Common myeloid progenitor, CD34-positive (primary cell): ENCODE measurements at regions of chr17 and their contacts with region 1.

Region 1: DNA sequence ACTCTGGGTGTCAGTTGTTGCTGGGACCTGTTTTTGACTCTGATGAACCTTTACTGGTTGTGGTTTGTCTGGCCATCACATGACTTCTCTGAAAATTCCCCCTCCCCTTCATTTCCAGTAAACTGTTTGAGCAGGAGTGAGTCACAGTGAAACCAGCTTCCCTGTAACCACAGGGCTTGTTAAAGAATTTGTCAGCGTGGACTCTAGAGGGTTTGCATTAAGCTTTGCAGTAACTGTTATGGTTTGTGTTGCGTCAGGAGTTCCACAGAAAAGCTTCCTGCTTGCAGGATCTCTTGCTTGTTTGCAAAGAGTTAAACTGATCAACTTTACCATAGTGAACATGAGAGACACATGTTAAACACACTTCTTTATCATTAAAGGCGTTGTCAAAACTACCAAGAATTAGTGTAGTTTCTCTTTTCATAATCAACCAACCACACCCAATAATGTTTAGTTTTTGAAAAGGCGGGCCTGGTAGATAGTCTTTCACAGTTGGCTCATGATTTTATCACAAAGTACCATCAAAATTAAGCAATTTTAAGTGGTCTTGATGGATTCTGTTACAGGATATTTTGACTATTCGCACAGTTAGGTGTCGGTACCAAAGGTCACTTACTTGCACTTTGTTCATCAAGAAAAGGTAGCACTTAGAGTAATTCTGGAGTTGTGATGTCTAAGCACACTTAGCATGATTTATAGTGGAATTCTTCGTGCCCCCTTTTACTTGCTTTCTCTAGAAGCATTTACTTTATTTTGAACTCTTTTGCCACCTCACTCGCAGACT is 79.3 kb downstream of the VMP1 start:
- DNase-seq: peak; percentile 96 to 99 (median 98)
- H3K4me3 ChIP-seq: peak overlapping the region in 6 of 7 experiments; percentile 21 to 65 (median 51)
- H3K27ac ChIP-seq: peak overlapping the region; percentile 93 to 96
- H3K4me1 ChIP-seq: peaks cover 37 to 79% (median 64%) of the 10 kb centered on the region in 4 experiments
- H3K27me3 ChIP-seq: no peaks in the 10 kb centered on the region

Region 2: GRCh38 chr17:59796785-59797205 is 10.1 kb after region 1 on chr17:
- CTCF ChIA-PET with region 1: interaction called, 13 read pairs
- POLR2A ChIA-PET with region 1: no interaction called
- DNase-seq: no peak
- H3K4me3 ChIP-seq: no peak overlapping the region
- H3K27ac ChIP-seq: no peak overlapping the region
- H3K4me1 ChIP-seq: peaks cover 0 to 20% (median 6%) of the 10 kb centered on the region in 4 experiments
- H3K27me3 ChIP-seq: no peaks in the 10 kb centered on the region

Region 3: GRCh38 chr17:59829217-59830006 is 42.7 kb after region 1 on chr17:
- CTCF ChIA-PET with region 1: interaction called, 8 read pairs
- POLR2A ChIA-PET with region 1: interaction called, 21 read pairs
- DNase-seq: peak; percentile 95 to 99 (median 97)
- H3K4me3 ChIP-seq: peak overlapping the region in 6 of 7 experiments; percentile 8 to 61 (median 46)
- H3K27ac ChIP-seq: peak overlapping the region; percentile 98 to 99
- H3K4me1 ChIP-seq: peaks cover 48 to 77% (median 73%) of the 10 kb centered on the region in 4 experiments
- H3K27me3 ChIP-seq: no peaks in the 10 kb centered on the region

Region 4: DNA sequence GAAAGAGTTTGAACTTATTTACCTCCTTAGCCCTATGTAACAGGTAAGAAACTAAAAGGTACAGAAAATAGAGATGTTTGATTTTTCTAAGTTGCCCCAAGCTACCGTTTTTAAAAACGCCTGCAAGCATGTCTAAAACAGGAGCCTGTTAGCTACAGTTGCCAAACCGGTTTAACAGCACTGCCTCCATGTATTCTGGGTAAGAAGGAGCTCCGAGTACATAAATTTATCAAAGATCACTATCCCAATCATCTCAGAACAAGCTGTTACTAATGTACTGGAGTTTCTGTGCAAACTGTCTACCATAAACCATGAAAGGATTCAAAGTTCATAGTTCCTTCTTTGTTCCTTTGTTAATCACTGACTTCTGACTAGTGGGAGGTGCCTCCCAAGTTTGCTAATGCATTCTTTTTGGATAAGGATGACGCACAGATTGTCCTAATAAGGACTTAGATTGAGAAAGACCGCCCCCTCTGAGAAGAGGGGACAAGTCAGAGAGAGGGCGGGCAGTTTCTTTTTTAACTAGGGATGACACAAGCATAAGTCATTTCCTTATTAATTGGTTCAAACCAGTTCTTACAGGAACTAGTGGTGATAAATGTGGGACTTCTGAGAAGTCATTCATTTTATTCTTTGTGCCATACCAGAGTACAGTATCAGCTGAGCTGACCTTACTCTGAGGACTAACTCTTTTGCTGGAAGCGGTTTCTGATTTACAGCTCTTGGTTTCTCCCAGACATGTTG is 50.8 kb after region 1 on chr17:
- CTCF ChIA-PET with region 1: interaction called, 9 read pairs
- POLR2A ChIA-PET with region 1: interaction called, 21 read pairs
- DNase-seq: peak; percentile 97 to 100 (median 99)
- H3K4me3 ChIP-seq: peak overlapping the region in 6 of 7 experiments; percentile 78 to 100 (median 90)
- H3K27ac ChIP-seq: peak overlapping the region; percentile 96
- H3K4me1 ChIP-seq: peaks cover 20 to 45% (median 38%) of the 10 kb centered on the region in 4 experiments
- H3K27me3 ChIP-seq: no peaks in the 10 kb centered on the region